ENCODE measurements at regions of chr6 and their contacts with region 1.

Region 1: GRCh38 chr6:157323255-157323965 is at the start of gene TMEM242:
- DNase-seq: peak; percentile 98
- H3K4me3 ChIP-seq: peak within 1 kb of the TSS; percentile 70 to 89 (median 72)
- H3K27ac ChIP-seq: peak within 1 kb of the TSS; percentile 94
- H3K4me1 ChIP-seq: peaks cover 30% of the 10 kb centered on the region
- H3K27me3 ChIP-seq: no peaks in the 10 kb centered on the region
- CTCF ChIP-seq: peak in 1 of 2 donors; percentile 14
- POLR2A ChIP-seq: peak; percentile 98
- total RNA-seq, gene TMEM242: 15.3 and 15.5 TPM in 2 replicates

Region 2: GRCh38 chr6:157379656-157380454 is 56.4 kb after region 1 on chr6:
- CTCF ChIA-PET with region 1: interaction called, 5 read pairs
- POLR2A ChIA-PET with region 1: interaction called, 4 read pairs
- dilution Hi-C with region 1: no loop called
- intact Hi-C with region 1: loop called (anchors 1 kb)
- DNase-seq: peak; percentile 91
- H3K4me3 ChIP-seq: peak overlapping the region; percentile 61 to 97 (median 74)
- H3K27ac ChIP-seq: peak overlapping the region; percentile 60
- H3K4me1 ChIP-seq: peaks cover 18% of the 10 kb centered on the region
- H3K27me3 ChIP-seq: no peaks in the 10 kb centered on the region
- CTCF ChIP-seq: no peak
- POLR2A ChIP-seq: no peak

Region 3: GRCh38 chr6:157535339-157536222 is 212.2 kb after region 1 on chr6:
- CTCF ChIA-PET with region 1: interaction called, 3 read pairs
- POLR2A ChIA-PET with region 1: no interaction called
- dilution Hi-C with region 1: no loop called
- intact Hi-C with region 1: loop called (anchors 2 kb)
- DNase-seq: peak; percentile 96
- H3K4me3 ChIP-seq: peak overlapping the region in 1 of 3 experiments; percentile 34
- H3K27ac ChIP-seq: peak overlapping the region; percentile 94
- H3K4me1 ChIP-seq: peaks cover 42% of the 10 kb centered on the region
- H3K27me3 ChIP-seq: no peaks in the 10 kb centered on the region
- CTCF ChIP-seq: no peak
- POLR2A ChIP-seq: no peak

Region 4: GRCh38 chr6:157597446-157598312 is 274.3 kb after region 1 on chr6:
- CTCF ChIA-PET with region 1: interaction called, 3 read pairs
- POLR2A ChIA-PET with region 1: no interaction called
- dilution Hi-C with region 1: no loop called
- intact Hi-C with region 1: loop called (anchors 2 kb)
- DNase-seq: peak; percentile 57
- H3K4me3 ChIP-seq: no peak overlapping the region
- H3K27ac ChIP-seq: no peak overlapping the region
- H3K4me1 ChIP-seq: no peaks in the 10 kb centered on the region
- H3K27me3 ChIP-seq: no peaks in the 10 kb centered on the region
- CTCF ChIP-seq: peak; percentile 50 to 68
- POLR2A ChIP-seq: no peak

Region 5: GRCh38 chr6:157879873-157880254 is 556.5 kb after region 1 on chr6:
- CTCF ChIA-PET with region 1: no interaction called
- POLR2A ChIA-PET with region 1: no interaction called
- dilution Hi-C with region 1: no loop called
- intact Hi-C with region 1: loop called (anchors 10 kb)
- DNase-seq: no peak
- H3K4me3 ChIP-seq: no peak overlapping the region
- H3K27ac ChIP-seq: no peak overlapping the region
- H3K4me1 ChIP-seq: peaks cover 2% of the 10 kb centered on the region
- H3K27me3 ChIP-seq: no peaks in the 10 kb centered on the region
- CTCF ChIP-seq: no peak
- POLR2A ChIP-seq: no peak

Measured in endothelial cell of umbilical vein (primary cell).